Mucosa of descending colon (tissue), 3 donors: ENCODE measurements at regions of chr10 and their contacts with region 1.

Region 1: GRCh38 chr10:5446390-5446926 is 34.1 kb downstream of the NET1 start:
- DNase-seq: peak; percentile 95 to 99 (median 98)
- ATAC-seq: peak; percentile 88
- H3K4me3 ChIP-seq: peak overlapping the region; percentile 40
- H3K4me1 ChIP-seq: peaks cover 33% of the 10 kb centered on the region
- CTCF ChIP-seq: no peak

Region 2: DNA sequence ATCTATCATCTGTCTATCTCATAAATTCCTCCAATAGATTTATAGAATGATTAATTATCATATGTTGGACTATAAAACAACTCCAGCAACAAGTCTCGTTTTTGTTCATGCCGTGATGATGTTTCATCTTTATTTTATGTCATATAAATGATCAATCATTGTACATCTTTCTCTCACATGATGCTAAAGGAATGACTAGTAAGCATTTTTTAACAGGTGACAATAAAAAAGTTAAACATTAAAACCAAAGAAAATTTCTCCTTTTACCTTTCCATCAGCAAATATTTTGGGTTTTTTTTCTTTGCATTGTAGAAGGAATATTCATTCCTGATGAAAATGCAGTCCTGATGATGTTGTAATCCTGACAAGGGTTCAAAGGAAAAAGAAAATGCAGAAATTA is 310.9 kb before region 1 on chr10:
- intact Hi-C with region 1: no loop called
- DNase-seq: no peak
- ATAC-seq: no peak
- H3K4me3 ChIP-seq: no peak overlapping the region
- H3K4me1 ChIP-seq: no peaks in the 10 kb centered on the region
- CTCF ChIP-seq: no peak

Region 3: DNA sequence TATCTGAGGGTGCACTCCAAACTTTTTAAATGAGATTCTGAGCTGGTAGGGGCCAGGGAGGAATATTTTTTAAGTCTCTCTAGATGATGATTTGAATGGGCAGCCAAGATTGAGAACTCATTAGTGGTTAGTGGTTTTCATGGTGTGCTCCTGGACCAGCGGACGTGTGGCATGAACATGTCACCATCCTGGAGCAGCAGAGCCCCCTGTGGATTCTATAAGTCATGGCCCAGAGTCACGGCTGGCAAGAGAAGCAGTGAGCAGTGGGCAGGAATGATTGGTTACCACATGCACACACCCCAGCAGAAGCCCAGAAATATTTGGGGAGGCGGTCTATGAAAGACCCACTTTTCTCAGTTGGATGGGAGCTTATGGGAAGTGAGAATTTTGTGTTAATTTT is 102.9 kb before region 1 on chr10:
- intact Hi-C with region 1: no loop called
- DNase-seq: peak in 1 of 3 donors; percentile 10
- ATAC-seq: no peak
- H3K4me3 ChIP-seq: no peak overlapping the region
- H3K4me1 ChIP-seq: no peaks in the 10 kb centered on the region
- CTCF ChIP-seq: no peak

Region 4: DNA sequence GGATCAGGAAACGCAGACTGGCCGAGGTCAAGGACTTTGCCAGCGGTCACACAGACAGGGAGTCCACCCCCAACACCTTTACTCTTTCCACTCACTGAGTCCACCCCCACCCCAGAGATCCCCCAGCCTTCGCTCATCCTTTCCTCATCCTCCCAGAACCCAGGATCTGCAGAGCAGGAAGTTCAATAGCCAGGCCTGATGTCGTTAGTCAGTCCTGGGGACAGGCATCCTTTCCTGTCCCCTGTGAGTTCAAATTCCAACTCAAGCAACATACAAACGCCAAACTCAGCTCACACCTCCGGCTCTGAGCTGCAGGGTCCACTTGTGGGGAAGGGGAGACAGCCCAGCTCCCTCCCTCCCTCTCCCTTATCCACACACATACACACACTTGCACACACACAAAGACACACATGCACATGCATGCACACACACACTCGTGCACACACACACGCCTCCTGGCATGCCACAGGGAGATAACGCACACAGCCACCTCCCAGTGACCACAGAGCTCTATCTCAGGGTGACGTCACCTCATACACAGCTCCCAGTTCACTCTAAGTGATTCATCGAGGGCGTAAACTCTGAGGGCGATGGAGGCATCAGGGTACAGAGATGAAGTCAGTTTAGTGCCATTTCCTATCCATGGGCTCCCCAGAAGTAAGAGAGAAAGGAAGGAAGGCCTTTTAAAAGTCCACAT is 102.2 kb after region 1 on chr10:
- intact Hi-C with region 1: loop called (anchors 5 to 10 kb)
- DNase-seq: peak; percentile 77 to 87 (median 86)
- ATAC-seq: peak; percentile 69
- H3K4me3 ChIP-seq: no peak overlapping the region
- H3K4me1 ChIP-seq: peaks cover 68% of the 10 kb centered on the region
- CTCF ChIP-seq: no peak

Region 5: DNA sequence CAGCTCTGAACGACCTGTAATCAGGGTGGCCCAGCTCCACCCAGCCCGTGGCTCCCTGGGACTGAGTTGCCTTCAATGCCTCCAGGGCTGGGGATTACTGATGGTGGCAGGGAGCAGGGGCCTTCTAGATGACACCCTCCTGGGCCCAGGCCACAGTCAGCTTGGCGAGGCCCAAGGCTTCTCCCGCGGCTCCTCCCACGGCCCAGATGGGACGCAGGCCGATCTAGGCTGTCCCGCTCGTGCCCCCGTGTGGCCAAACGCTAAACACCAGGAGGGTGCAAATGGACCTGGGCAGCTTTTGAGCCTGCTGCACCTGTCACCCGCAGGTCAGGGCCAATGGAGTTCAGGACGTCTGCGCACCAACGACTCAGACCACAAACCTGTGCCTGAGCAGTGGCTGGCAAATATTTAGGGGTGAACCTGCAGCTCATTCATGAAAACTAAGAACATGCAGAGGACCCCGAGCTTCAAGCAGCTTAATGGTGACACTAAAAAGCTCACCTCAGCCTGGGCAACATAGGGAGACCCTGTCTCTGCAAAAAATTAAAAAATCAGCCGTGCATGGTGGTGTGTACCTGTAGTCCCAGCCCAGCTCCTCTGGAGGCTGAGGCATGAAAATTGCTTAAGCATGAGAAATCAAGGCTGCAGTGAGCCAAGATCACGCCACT is 176.8 kb after region 1 on chr10:
- intact Hi-C with region 1: loop called (anchors 5 kb)
- DNase-seq: peak; percentile 94 to 97 (median 96)
- ATAC-seq: peak; percentile 96
- H3K4me3 ChIP-seq: no peak overlapping the region
- H3K4me1 ChIP-seq: peaks cover 11% of the 10 kb centered on the region
- CTCF ChIP-seq: peak; percentile 93